Heart right ventricle (tissue), 16 donors: ENCODE measurements at regions of chr9 and their contacts with region 1.

Region 1: GRCh38 chr9:130940693-130941576 is 1.9 kb upstream of the FIBCD1 start:
- DNase-seq: peak; percentile 45 to 73
- ATAC-seq: peak; percentile 52 to 84 (median 73)
- H3K4me3 ChIP-seq: no peak overlapping the region
- H3K27ac ChIP-seq: no peak overlapping the region
- H3K4me1 ChIP-seq: peaks cover 0 to 37% (median 21%) of the 10 kb centered on the region in 9 donors
- H3K27me3 ChIP-seq: peaks cover 33 to 75% (median 72%) of the 10 kb centered on the region in 7 donors
- CTCF ChIP-seq: peak; percentile 57 to 86 (median 84)

Region 2: DNA sequence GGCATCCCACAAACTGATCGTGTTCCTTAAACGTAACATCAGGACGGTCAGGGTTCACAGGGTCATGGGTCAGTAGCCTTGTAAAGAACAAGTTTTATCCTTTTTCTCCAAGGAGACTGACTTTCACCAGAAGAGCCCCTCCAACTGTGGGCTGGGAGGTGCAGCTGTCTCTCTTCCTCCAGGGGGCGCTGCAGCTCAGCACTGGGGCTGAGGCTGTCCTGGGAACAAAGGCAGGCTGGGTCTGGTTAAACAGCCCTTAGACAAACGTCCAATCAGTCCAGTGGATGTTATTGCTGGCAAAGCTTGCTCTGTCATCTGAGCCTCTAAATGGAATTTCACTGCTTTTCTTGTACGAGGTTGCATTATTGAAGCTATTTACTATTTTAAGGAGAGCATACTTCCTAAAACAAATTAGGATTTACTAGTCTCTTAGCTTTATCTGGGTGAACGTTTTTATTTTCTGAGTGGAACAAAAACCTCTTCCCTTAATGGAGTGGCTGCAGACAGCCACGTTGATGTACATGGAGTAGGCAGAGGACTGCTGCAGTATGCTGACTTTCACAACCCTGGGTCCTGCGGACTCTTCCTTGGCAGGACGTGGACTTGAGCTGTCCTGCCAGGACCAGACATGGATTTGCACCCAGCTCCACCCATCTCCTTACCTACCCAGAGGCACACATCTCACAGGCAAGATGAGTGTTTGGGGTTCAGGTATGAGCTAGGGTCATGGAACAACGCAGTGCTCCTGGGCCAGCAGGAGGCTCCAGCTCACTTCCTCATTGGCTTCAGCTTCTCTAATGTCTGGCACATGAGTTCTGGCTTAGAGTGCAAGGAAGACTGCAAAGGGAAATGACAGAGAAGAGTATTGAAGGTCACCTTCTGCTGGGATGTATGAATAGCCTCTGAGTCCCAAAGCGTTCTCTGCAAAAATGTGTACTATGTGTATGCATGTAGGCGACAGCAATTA is 239.6 kb before region 1 on chr9:
- intact Hi-C with region 1: loop called (anchors 2 to 5 kb)
- DNase-seq: peak; percentile 77 to 85
- ATAC-seq: peak; percentile 85 to 97 (median 94)
- H3K4me3 ChIP-seq: no peak overlapping the region
- H3K27ac ChIP-seq: peak overlapping the region in 2 of 10 donors; percentile 37 to 65
- H3K4me1 ChIP-seq: peaks cover 0 to 18% (median 6%) of the 10 kb centered on the region in 9 donors
- H3K27me3 ChIP-seq: no peaks in the 10 kb centered on the region
- CTCF ChIP-seq: peak; percentile 81 to 98 (median 95)

Region 3: GRCh38 chr9:130707225-130707976 is 233.5 kb before region 1 on chr9:
- intact Hi-C with region 1: loop called in 7 of 10 experiments (anchors 2 to 5 kb)
- DNase-seq: peak in 1 of 2 donors; percentile 74
- ATAC-seq: peak in 4 of 8 donors; percentile 18 to 41 (median 28)
- H3K4me3 ChIP-seq: no peak overlapping the region
- H3K27ac ChIP-seq: no peak overlapping the region
- H3K4me1 ChIP-seq: peaks cover 0 to 8% (median 4%) of the 10 kb centered on the region in 9 donors
- H3K27me3 ChIP-seq: no peaks in the 10 kb centered on the region
- CTCF ChIP-seq: peak; percentile 66 to 90 (median 79)

Region 4: DNA sequence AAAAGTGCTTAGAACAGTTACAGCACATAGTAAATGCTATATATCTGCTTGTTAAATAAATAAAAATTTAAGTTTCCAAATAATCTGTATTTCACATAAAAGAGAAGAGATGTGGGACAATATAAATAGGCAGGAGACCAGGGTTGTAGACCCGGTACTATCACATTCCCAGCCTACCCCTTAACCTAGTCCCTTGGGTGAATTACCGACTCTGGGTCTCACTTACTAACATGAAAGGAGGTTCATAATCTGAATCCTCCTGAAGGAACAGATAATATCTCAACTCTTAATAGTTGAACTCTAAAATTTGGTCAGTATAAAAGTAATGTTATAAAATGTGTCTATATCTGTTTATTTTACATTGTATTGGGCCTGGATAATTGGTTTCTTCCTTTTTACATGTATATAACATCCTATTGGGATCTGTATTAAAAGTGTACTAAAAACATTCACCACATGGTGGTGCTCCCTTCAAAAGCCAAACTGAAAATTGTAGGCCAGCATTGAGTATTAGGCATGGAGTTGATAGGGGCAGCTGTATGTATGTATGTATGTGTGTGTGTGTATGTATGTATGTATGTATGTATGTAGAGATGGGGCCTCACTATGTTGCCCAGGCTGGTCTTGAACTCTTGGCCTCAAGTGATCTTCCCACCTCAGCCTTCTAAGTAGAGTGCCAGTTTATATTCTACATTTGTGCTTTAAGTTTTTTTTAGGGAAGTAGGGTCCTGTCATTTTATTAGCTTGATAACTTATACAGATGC is 170.1 kb before region 1 on chr9:
- intact Hi-C with region 1: loop called in 5 of 10 experiments (anchors 5 to 10 kb)
- DNase-seq: no peak
- ATAC-seq: peak; percentile 44 to 78 (median 74)
- H3K4me3 ChIP-seq: no peak overlapping the region
- H3K27ac ChIP-seq: no peak overlapping the region
- H3K4me1 ChIP-seq: peaks cover 0 to 42% (median 28%) of the 10 kb centered on the region in 9 donors
- H3K27me3 ChIP-seq: no peaks in the 10 kb centered on the region
- CTCF ChIP-seq: peak; percentile 39 to 83 (median 68)

Region 5: GRCh38 chr9:130866474-130866965 is 74.4 kb before region 1 on chr9:
- intact Hi-C with region 1: loop called in 2 of 10 experiments (anchors 2 to 5 kb)
- DNase-seq: peak in 1 of 2 donors; percentile 75
- ATAC-seq: peak in 5 of 8 donors; percentile 43 to 56 (median 47)
- H3K4me3 ChIP-seq: no peak overlapping the region
- H3K27ac ChIP-seq: peak overlapping the region in 1 of 10 donors; percentile 2
- H3K4me1 ChIP-seq: peaks cover 0 to 74% (median 36%) of the 10 kb centered on the region in 9 donors
- H3K27me3 ChIP-seq: no peaks in the 10 kb centered on the region
- CTCF ChIP-seq: peak; percentile 63 to 85 (median 77)

Region 6: DNA sequence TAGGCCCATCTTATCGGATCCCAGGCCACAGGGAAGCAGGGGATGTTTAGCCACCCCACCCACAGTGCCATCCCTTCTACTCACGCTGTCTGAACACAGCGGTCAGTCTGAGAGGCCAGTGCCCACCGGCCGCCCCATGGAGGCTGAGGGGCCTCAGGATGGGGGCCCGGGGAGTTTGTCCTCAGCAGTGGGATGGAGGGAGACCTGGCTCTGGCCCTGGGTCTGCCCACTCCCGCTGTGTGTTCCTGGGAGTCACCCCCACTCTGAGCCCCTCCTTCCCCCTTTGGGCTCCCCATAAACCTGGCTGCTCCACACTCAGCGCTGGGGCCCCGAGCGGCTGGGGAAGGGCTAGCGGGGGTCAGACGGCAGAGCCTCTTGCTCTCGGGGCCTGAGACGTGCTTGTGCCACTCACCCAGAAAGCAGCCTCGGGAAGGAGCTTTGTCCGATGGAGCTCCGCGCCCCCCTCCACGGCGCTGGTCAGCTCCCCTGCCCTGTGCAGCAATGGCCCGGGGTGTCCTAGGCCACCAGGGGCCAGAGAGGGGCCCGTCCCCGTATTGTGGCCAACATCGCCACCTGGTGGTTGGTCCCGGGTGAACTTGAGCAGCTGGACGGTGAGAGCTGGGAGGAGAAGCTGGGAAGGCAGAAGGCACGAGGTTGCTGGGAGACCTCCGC is 57.1 kb after region 1 on chr9:
- intact Hi-C with region 1: loop called in 2 of 10 experiments (anchors 5 kb)
- DNase-seq: peak; percentile 69 to 76
- ATAC-seq: peak; percentile 76 to 93 (median 85)
- H3K4me3 ChIP-seq: no peak overlapping the region
- H3K27ac ChIP-seq: no peak overlapping the region
- H3K4me1 ChIP-seq: peaks cover 0 to 11% (median 3%) of the 10 kb centered on the region in 9 donors
- H3K27me3 ChIP-seq: peaks cover 0 to 51% (median 43%) of the 10 kb centered on the region in 7 donors
- CTCF ChIP-seq: peak; percentile 44 to 74 (median 69)

Region 7: DNA sequence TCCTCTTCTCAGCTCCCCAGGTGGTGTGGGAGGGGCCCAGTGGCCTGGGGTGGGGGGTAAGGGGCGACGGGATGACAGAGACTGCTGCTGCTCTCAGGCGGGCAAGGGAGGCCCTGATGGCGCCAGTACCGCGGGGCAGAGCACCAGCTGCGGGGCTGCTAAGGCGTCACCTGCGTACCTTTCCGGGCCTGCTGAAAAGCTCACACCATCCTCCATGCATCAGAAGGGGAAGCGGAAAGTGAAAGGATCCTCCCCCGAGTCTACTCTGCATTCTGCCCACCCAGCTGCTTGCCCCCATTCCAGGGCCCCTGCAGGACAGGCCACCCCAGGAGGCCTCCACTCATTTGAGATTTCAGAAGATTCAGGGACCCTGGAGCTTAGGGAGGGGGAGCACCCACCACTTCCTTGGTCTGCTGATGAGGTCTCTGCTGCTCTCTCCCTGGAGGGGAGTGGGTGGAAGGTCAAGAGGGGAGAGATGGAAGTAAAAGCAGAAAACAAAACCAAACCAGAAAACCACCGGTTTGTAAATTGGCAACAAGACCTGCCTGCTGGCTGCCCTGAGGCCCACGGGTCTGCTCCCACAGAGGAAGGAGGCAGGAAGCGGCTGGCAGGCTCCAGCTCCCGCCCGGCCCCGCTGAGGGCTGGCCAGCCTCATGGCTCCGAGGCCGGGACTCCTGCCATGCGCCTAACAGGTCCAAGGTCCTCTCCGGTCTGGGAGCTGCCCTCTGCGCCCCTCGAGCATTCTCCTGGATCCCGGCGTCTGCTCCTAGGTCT is 638.0 kb after region 1 on chr9:
- intact Hi-C with region 1: no loop called
- DNase-seq: no peak
- ATAC-seq: peak in 1 of 8 donors; percentile 27
- H3K4me3 ChIP-seq: no peak overlapping the region
- H3K27ac ChIP-seq: peak overlapping the region in 3 of 10 donors; percentile 5 to 71 (median 9)
- H3K4me1 ChIP-seq: peaks cover 0 to 29% (median 13%) of the 10 kb centered on the region in 9 donors
- H3K27me3 ChIP-seq: no peaks in the 10 kb centered on the region
- CTCF ChIP-seq: no peak